ENCODE measurements at regions of chr3 and their contacts with region 1.

Region 1: DNA sequence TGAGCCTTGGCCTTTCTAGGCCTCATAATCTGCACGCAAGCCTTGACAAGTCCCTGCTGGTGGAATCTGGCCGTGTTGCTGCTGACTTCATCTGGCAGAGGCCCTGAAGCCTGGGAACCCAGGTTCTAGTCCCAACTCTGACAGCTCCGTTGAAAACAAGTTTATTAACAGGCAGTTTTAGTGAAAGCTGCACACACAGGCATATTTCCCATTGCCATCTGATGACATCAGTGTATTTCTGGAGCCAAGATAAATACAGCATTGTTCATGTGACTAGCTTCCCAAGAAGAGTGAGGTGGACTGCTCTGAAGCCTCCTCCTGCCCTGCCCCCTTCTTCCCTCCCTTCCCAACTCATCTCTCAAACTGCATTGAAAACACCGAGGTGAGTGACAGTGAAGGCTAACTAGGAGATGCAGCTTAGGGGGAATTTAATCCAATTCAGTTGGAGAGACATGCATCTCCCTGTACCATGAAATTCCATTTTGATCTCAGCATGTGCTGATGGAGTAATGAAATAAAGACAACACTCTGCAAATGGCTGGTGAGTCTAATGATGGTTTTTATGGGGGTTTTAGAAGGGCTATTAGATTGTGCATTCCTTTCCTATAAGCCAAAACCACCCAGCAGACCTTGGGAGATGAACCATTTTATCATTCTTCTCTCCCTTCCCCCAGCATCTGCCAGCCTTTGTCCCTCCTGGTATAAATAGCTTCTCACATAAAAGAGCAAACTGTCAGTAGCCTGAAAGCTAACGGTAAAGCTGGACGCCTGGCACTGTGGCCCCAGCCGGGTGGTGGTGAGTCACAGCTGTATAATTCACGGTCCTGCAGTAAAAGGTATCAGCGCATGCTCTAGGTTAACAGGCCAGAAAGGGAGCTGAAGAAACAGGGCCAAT is 38.0 kb downstream of the PRICKLE2 start:
- DNase-seq: peak; percentile 58 to 89
- H3K4me3 ChIP-seq: no peak overlapping the region
- CTCF ChIP-seq: no peak
- POLR2A ChIP-seq: no peak

Region 2: DNA sequence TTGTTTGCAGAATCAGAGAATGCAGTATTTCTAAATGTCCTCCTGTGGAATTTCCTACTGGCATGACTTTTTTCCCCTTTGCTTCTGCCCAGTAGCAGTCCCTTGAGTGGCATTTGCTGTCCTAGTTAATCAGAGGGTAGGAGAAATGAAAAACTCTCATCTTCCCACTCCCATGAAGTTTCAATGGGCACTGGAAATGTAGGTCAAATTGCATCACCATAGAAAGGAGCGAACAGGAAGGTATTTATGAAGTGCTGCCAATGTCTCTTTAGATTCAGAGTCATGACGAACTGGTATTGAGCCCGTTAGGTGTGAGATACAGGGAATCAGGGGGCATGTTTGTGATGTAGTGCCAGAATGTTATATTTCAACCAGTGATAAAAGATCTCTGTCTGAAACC is 300.5 kb before region 1 on chr3:
- intact Hi-C with region 1: no loop called
- DNase-seq: no peak
- H3K4me3 ChIP-seq: no peak overlapping the region
- CTCF ChIP-seq: no peak
- POLR2A ChIP-seq: no peak

Region 3: DNA sequence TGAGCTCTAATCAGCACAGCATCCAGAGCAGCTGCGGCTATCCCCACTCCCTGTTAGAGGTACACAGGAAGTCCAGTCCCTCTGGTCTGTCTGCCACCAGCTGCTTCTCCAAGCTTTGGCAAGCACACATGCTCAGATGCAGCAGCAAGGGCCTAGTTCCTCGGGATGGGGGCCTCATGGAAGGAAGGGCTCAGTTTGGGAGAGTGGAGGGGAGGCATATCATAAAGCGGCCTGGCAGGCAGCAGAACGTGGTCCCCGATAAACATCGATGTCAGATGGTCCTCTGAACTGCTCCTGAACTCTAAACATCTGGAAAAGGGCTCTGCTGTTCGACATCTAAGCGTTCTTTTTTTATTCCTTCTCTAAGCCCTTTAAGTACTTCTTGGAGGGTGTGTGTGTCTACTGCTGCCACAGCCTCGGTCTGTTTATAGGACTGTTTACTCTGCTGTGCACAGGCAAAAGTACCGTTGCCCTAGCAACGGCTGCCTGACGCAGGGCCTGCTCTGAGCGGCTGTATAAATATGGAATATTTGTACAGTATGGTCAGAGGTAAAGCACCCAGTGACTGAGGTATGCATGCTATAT is 36.6 kb before region 1 on chr3:
- intact Hi-C with region 1: loop called (anchors 1 kb)
- DNase-seq: peak in 1 of 2 donors; percentile 31
- H3K4me3 ChIP-seq: no peak overlapping the region
- CTCF ChIP-seq: no peak
- POLR2A ChIP-seq: no peak